ENCODE measurements at regions of chr12 and their contacts with region 1.

Region 1: DNA sequence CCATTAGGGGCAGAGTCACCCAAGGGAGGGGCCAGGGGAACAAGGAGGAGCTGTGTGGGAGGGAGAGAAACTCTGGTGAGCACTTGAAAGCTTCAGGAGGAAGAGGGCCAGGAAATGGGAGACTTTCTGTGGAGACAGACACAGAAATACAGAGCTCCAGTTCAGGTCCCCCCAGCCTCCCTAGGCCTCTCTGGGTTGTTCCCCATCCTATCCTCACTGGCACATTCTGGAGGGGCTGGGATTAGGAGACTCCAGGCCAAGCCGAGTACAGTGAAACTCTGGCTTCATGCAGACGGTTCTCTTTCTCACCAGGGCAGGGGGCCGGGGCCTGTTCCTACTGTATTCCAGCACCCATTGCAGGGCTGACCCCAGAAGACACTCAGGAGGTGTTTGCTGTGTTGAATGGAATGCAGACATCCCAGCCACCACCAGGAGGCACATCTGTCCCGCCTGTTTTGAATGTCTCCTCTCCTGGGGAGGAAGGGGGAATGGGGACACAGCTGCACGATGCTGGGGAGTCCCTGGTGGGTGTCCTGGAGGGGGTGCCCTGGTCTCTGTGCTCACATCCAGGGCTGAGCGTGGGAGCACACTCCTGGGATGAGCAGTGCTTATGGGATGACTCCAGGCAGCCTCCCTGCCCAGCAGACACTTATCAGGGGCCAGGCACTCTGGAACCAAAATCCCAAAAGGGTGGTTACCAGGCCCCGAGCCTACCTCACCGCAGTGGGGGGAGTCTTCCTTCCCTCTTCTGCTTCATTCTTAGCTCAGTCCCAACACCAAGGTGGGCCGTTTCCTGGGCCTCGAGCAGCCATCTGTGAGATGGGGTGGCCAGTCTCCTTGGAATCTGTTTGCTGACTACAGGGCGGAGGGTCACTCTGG is 5.5 kb upstream of the KRT84 start:
- DNase-seq: peak; percentile 70
- ATAC-seq: peak; percentile 57
- H3K4me3 Mint-ChIP-seq: no peak overlapping the region
- H3K27ac Mint-ChIP-seq: no peak overlapping the region
- H3K4me1 Mint-ChIP-seq: peaks cover 4% of the 10 kb centered on the region; the same call in 1 of the 2 replicates
- H3K27me3 Mint-ChIP-seq: peaks cover 4% of the 10 kb centered on the region; the same call in 1 of the 2 replicates
- CTCF ChIP-seq: 0 out of 2 replicates have a peak, but pooled peaks have one; percentile 38

Region 2: DNA sequence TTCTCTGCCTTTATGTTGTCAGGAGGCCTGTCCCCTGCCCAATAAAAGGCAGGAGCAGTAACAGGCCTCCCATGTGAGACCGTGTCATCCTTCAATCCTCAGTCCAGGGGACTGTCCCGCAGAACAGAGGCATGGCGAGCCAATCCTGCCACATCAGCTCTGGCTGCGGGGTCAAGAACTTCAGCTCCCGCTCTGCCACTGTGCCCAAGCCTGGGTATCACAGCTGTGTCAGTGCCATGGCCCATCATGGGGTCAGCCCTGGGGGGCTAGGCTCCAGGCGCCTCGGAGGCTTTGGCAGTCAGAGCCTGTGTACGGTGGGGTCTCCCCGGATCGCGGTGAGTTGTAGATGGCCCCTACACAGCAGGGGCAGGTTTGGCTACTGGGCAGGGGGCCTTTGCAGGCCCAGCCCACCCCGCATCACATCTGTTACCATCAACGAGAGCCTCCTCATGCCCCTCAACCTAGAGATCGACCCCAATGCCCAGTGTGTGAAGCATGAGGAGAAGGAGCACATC is 49.9 kb before region 1 on chr12:
- CTCF ChIA-PET with region 1: no interaction called
- POLR2A ChIA-PET with region 1: no interaction called
- DNase-seq: no peak
- ATAC-seq: no peak
- H3K4me3 Mint-ChIP-seq: no peak overlapping the region
- H3K27ac Mint-ChIP-seq: no peak overlapping the region
- H3K4me1 Mint-ChIP-seq: no peaks in the 10 kb centered on the region
- H3K27me3 Mint-ChIP-seq: no peaks in the 10 kb centered on the region; the same call in 1 of the 2 replicates
- CTCF ChIP-seq: no peak

Region 3: GRCh38 chr12:52372216-52373154 is 18.5 kb before region 1 on chr12:
- CTCF ChIA-PET with region 1: interaction called, 38 read pairs
- POLR2A ChIA-PET with region 1: no interaction called
- DNase-seq: peak; percentile 81
- ATAC-seq: peak; percentile 91
- H3K4me3 Mint-ChIP-seq: no peak overlapping the region
- H3K27ac Mint-ChIP-seq: no peak overlapping the region
- H3K4me1 Mint-ChIP-seq: no peaks in the 10 kb centered on the region
- H3K27me3 Mint-ChIP-seq: no peaks in the 10 kb centered on the region
- CTCF ChIP-seq: peak; percentile 50; the same call in 1 of the 2 replicates

Region 4: GRCh38 chr12:52428121-52428520 is 37.1 kb after region 1 on chr12:
- CTCF ChIA-PET with region 1: interaction called, 12 read pairs
- POLR2A ChIA-PET with region 1: no interaction called
- DNase-seq: peak; percentile 25
- ATAC-seq: no peak
- H3K4me3 Mint-ChIP-seq: no peak overlapping the region
- H3K27ac Mint-ChIP-seq: no peak overlapping the region
- H3K4me1 Mint-ChIP-seq: peaks cover 4% of the 10 kb centered on the region; the same call in 1 of the 2 replicates
- H3K27me3 Mint-ChIP-seq: peaks cover 2% of the 10 kb centered on the region; the same call in 1 of the 2 replicates
- CTCF ChIP-seq: no peak

Region 5: GRCh38 chr12:52487211-52487610 is 96.2 kb after region 1 on chr12:
- CTCF ChIA-PET with region 1: no interaction called
- POLR2A ChIA-PET with region 1: no interaction called
- DNase-seq: no peak
- ATAC-seq: no peak
- H3K4me3 Mint-ChIP-seq: no peak overlapping the region
- H3K27ac Mint-ChIP-seq: no peak overlapping the region
- H3K4me1 Mint-ChIP-seq: no peaks in the 10 kb centered on the region
- H3K27me3 Mint-ChIP-seq: peaks cover 6% of the 10 kb centered on the region; the same call in 1 of the 2 replicates
- CTCF ChIP-seq: no peak

Region 6: DNA sequence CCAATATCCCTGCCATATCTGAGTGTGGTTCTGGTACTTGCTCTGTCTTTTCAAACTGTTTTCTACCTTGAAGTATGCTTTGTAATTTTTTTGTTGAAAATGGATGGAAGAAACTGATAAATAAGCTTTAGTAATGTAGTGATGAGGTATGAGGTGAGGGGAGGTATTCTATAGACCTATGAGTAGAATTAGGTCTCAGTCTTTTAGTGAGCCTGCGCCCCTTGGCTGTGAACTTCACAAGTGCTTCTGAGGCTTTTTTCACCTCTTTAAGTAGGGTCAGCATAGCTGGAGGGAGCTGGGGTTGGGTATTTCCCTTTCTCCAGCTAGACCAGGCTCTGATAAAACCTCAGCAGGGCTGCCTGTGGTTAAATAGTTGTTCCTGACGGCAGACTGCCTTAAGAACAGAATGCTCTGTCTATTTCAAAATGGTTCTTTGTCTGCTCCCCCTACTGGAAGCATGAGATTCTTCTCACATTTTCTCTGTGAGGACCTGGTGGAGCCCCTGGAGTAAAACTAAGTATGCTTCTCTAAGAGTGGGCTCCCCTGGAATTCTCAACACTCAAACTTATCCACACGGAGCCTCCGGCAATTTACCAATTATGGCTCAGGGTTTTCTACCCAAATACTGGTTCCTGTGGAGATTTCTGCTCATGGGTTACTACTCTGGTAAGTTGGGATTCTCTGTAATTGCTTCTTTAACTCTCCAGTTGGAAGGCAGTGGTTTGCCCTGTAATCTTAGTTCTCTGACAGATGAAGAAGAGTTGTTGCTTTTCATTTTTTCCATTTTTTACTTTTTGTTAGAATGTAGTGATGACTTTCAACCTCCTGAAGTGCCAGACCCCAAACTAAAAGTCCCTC is 116.1 kb after region 1 on chr12:
- CTCF ChIA-PET with region 1: interaction called, 23 read pairs
- POLR2A ChIA-PET with region 1: no interaction called
- DNase-seq: no peak
- ATAC-seq: peak; percentile 95
- H3K4me3 Mint-ChIP-seq: no peak overlapping the region
- H3K27ac Mint-ChIP-seq: no peak overlapping the region
- H3K4me1 Mint-ChIP-seq: peaks cover 8% of the 10 kb centered on the region; the same call in 1 of the 2 replicates
- H3K27me3 Mint-ChIP-seq: peaks cover 2% of the 10 kb centered on the region
- CTCF ChIP-seq: peak; percentile 31; the same call in 1 of the 2 replicates

Region 7: GRCh38 chr12:52543985-52544883 is 153.3 kb after region 1 on chr12:
- CTCF ChIA-PET with region 1: interaction called, 24 read pairs
- POLR2A ChIA-PET with region 1: no interaction called
- DNase-seq: no peak
- ATAC-seq: peak; percentile 68
- H3K4me3 Mint-ChIP-seq: no peak overlapping the region
- H3K27ac Mint-ChIP-seq: no peak overlapping the region
- H3K4me1 Mint-ChIP-seq: no peaks in the 10 kb centered on the region
- H3K27me3 Mint-ChIP-seq: no peaks in the 10 kb centered on the region
- CTCF ChIP-seq: no peak

Region 8: GRCh38 chr12:52870351-52871290 is 479.6 kb after region 1 on chr12:
- CTCF ChIA-PET with region 1: interaction called, 38 read pairs
- POLR2A ChIA-PET with region 1: no interaction called
- DNase-seq: peak; percentile 90
- ATAC-seq: peak; percentile 74
- H3K4me3 Mint-ChIP-seq: no peak overlapping the region
- H3K27ac Mint-ChIP-seq: no peak overlapping the region
- H3K4me1 Mint-ChIP-seq: peaks cover 16% of the 10 kb centered on the region
- H3K27me3 Mint-ChIP-seq: peaks cover 26% of the 10 kb centered on the region
- CTCF ChIP-seq: peak; percentile 86